OCI-LY7 (cell line): ENCODE measurements at regions of chr18 and their contacts with region 1.

Region 1: DNA sequence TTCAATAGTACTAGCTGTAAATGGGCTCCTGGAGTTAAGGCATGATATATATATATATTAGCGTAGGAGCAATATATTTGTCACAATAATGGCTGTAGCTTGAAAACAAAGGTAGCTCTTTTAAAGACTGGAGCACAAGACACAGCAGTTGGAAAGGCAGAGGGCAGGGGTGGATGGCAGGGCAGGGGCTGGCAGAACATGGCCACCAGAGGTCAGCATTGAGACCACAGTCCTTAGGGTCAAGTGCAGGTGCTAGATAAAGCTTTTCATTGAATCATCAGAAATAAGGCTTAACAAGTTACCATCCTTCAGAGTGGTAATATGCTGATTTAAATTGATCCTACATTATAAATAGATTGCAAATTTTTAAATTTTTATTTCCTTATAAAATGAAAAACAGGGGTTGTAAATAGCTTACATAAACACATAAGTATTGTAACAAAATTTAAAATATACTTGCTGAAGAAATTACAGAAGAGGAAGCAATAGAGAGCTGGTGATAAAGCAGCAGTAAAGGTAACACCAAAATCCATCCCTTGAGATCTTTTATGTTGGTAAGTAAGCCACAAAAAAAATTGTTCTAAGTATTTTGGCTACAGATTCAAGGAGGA is 161.2 kb upstream of the PIEZO2 start:
- DNase-seq: peak; percentile 64
- H3K4me3 ChIP-seq: no peak overlapping the region
- H3K27ac ChIP-seq: no peak overlapping the region
- H3K4me1 ChIP-seq: no peaks in the 10 kb centered on the region
- CTCF ChIP-seq: peak; percentile 93

Region 2: DNA sequence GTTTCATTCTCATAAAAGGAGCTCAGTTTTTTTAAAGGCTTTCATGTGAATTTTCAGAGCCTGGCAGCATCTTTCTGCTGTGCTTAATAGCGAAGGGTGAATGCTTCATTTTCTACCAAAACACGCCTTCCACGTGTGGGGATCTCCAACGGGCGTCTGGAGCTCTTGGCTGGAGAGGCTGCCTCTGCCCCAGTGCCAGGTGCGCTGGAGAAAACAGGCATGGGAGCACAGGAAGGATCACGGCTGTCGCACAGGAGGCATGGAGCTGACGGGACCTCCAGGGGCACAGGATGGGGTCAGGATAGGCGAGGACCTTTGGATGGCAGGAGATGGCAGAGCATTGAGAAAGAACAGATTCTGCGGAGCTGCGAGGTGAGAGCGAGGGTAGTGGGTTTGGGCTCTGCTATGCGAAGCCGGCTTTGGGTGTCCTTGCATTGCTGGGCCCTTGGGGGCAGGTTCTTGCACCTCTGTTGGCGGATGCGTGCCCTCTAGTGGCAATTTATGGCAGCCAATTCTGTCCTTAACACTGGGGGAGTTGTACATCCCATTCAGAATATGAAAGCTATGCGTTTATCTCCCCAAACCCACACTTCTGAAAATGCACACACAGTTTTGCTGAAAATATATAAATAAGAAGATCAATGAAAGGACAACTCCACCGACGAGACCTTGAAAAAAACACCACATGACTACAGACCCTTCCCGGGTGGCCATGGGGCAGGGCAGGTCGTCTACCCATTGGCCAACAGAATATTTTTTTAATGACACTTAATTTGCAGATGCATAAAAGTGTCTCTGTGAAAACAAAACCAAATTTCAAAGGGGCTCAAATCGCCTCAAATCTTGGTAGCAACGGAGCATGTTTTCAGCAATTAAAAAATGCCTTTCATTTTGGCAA is 208.5 kb after region 1 on chr18:
- CTCF ChIA-PET with region 1: interaction called, 6 read pairs
- POLR2A ChIA-PET with region 1: no interaction called
- intact Hi-C with region 1: loop called (anchors 1 kb)
- DNase-seq: peak; percentile 82
- H3K4me3 ChIP-seq: no peak overlapping the region
- H3K27ac ChIP-seq: no peak overlapping the region
- H3K4me1 ChIP-seq: no peaks in the 10 kb centered on the region
- CTCF ChIP-seq: peak; percentile 96

Region 3: GRCh38 chr18:11553098-11553940 is 242.7 kb after region 1 on chr18:
- CTCF ChIA-PET with region 1: interaction called, 11 read pairs
- POLR2A ChIA-PET with region 1: no interaction called
- intact Hi-C with region 1: loop called (anchors 2 kb)
- DNase-seq: peak; percentile 70
- H3K4me3 ChIP-seq: no peak overlapping the region
- H3K27ac ChIP-seq: no peak overlapping the region
- H3K4me1 ChIP-seq: peaks cover 8% of the 10 kb centered on the region
- CTCF ChIP-seq: peak; percentile 93

Region 4: DNA sequence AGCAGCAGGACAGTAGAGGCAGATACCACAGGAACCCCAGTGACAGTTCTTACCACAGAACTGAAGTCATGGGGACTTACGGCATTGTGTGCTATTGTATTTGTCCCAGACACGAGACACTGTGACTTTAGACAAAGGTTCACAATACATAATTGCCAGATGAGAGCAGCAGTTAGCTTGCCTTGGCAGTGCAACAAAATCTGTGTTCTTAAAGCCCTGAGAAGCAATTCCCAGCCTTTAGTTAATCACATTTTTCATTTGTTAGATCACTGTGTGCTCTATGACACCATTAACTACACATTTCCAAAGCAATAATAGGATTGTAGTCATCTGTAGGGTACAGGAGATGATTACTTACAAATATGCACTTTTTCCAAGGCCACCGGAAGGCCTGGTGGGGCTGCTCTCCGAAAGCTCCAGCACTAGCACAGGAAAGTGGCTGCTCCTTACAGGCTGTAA is 1810.4 kb after region 1 on chr18:
- CTCF ChIA-PET with region 1: no interaction called
- POLR2A ChIA-PET with region 1: no interaction called
- intact Hi-C with region 1: loop called (anchors 10 kb)
- DNase-seq: no peak
- H3K4me3 ChIP-seq: no peak overlapping the region
- H3K27ac ChIP-seq: no peak overlapping the region
- H3K4me1 ChIP-seq: no peaks in the 10 kb centered on the region
- CTCF ChIP-seq: no peak